GM13976 (cell line): ENCODE measurements at regions of chr7 and their contacts with region 1.

Region 1: DNA sequence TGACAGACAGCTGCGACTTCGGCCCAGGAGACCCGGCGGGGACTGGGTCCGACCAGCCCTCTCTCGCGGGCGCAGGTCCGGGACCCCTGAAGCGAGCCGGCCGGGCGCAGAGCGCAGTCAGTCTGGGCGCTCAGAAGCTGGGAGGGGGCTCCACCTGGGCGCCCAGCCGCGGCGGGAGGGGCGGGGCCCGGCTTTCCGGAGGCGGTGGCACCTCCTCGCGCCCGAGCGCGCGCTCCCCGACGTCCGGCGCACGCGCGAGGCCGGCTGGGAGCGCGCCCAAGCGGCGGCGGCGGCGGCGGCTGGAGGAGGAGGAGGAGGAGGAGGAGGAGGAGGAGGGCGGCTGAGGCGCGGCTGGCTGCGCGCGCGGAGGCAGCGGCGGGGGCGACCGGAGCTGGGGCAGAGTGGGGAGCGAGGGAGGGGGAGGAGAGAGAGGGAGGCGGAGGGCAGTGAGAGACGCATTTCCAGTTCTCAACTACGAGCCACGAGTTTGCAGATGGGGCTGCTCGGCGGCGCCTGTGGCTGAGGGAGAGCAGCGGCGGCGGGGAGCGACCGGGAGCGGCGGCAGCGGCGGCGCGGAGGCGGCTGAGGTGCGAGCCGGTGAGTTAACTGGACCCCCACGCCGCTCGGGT is at the start of gene PALS2:
- DNase-seq: peak; percentile 91
- CTCF ChIP-seq: no peak

Region 2: GRCh38 chr7:24419077-24419476 is 154.0 kb before region 1 on chr7:
- in situ Hi-C with region 1: loop called (anchors 10 kb)
- DNase-seq: no peak
- CTCF ChIP-seq: no peak